Naive thymus-derived CD8-positive, alpha-beta T cell (primary cell): ENCODE measurements at regions of chr14 and their contacts with region 1.

Region 1: GRCh38 chr14:97602438-97603117 is 805.4 kb downstream of the VRK1 start:
- DNase-seq: peak; percentile 52 to 91 (median 78)
- ATAC-seq: peak; percentile 88 to 92
- H3K4me3 Mint-ChIP-seq: no peak overlapping the region
- H3K27ac Mint-ChIP-seq: no peak overlapping the region
- H3K4me1 Mint-ChIP-seq: peaks cover 9 to 31% (median 18%) of the 10 kb centered on the region in 4 donors
- H3K27me3 Mint-ChIP-seq: no peaks in the 10 kb centered on the region

Region 2: DNA sequence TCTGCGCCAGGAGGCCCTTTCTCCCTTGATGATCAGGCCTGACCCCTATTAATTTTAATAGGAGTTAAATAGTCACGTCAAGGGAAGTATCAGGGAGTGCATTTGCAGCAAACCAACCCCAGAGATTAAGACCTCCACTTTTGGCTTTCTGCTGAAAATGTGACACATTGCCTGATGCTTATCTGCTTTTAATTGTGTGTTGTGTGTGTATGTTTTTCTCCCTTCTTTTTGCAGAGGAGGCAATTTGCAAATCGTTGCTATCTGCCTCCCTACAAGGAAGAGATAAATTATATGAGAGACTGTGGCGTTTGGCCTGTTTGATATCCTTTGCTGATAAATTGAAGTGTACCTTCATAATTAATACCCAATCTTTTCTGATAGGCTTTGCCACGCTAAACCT is 17.5 kb after region 1 on chr14:
- POLR2A ChIA-PET with region 1: interaction called, 39 read pairs
- DNase-seq: no peak
- ATAC-seq: peak in 1 of 2 donors; percentile 18
- H3K4me3 Mint-ChIP-seq: peak overlapping the region; percentile 69 to 93 (median 86)
- H3K27ac Mint-ChIP-seq: peak overlapping the region; percentile 85 to 99 (median 96)
- H3K4me1 Mint-ChIP-seq: peaks cover 34 to 51% (median 47%) of the 10 kb centered on the region in 4 donors
- H3K27me3 Mint-ChIP-seq: no peaks in the 10 kb centered on the region

Region 3: GRCh38 chr14:97634751-97635150 is 32.2 kb after region 1 on chr14:
- POLR2A ChIA-PET with region 1: interaction called, 14 read pairs
- DNase-seq: peak in 9 of 10 donors; percentile 14 to 69 (median 58)
- ATAC-seq: peak; percentile 84 to 92
- H3K4me3 Mint-ChIP-seq: peak overlapping the region; percentile 77 to 94 (median 90)
- H3K27ac Mint-ChIP-seq: peak overlapping the region; percentile 61 to 96 (median 90)
- H3K4me1 Mint-ChIP-seq: peaks cover 30 to 54% (median 48%) of the 10 kb centered on the region in 4 donors
- H3K27me3 Mint-ChIP-seq: no peaks in the 10 kb centered on the region

Region 4: DNA sequence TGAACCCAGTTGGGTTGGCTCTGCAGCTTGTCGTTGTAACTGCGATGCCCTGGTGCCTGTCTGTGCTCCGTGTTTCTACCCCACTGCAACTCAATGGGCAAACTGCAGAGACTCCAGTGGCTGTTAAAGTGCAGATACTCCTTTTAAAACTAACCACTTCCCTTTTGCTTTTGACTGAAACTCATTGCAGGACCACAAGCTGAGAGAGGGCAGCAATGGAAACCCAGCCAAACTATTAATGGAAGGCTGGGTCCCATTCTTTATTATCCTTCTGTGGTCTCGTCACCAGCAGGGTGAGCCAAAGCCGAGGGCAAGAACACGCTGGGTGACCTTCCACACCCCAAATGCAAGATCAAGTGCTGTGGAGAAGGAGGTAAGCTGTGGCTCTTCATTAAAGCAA is 105.0 kb after region 1 on chr14:
- POLR2A ChIA-PET with region 1: interaction called, 12 read pairs
- DNase-seq: peak in 2 of 10 donors; percentile 26 to 31
- ATAC-seq: peak; percentile 24 to 36
- H3K4me3 Mint-ChIP-seq: peak overlapping the region in 8 of 10 donors; percentile 12 to 89 (median 74)
- H3K27ac Mint-ChIP-seq: peak overlapping the region in 9 of 10 donors; percentile 71 to 94 (median 88)
- H3K4me1 Mint-ChIP-seq: peaks cover 62 to 98% (median 96%) of the 10 kb centered on the region in 4 donors
- H3K27me3 Mint-ChIP-seq: no peaks in the 10 kb centered on the region

Region 5: GRCh38 chr14:97724265-97724731 is 121.7 kb after region 1 on chr14:
- POLR2A ChIA-PET with region 1: interaction called, 16 read pairs
- DNase-seq: peak in 7 of 10 donors; percentile 29 to 65 (median 57)
- ATAC-seq: peak; percentile 82 to 86
- H3K4me3 Mint-ChIP-seq: peak overlapping the region; percentile 77 to 92 (median 85)
- H3K27ac Mint-ChIP-seq: peak overlapping the region; percentile 88 to 100 (median 96)
- H3K4me1 Mint-ChIP-seq: peaks cover 44 to 84% (median 77%) of the 10 kb centered on the region in 4 donors
- H3K27me3 Mint-ChIP-seq: no peaks in the 10 kb centered on the region